GM13976 (cell line): ENCODE measurements at regions of chr15 and their contacts with region 1.

Region 1: DNA sequence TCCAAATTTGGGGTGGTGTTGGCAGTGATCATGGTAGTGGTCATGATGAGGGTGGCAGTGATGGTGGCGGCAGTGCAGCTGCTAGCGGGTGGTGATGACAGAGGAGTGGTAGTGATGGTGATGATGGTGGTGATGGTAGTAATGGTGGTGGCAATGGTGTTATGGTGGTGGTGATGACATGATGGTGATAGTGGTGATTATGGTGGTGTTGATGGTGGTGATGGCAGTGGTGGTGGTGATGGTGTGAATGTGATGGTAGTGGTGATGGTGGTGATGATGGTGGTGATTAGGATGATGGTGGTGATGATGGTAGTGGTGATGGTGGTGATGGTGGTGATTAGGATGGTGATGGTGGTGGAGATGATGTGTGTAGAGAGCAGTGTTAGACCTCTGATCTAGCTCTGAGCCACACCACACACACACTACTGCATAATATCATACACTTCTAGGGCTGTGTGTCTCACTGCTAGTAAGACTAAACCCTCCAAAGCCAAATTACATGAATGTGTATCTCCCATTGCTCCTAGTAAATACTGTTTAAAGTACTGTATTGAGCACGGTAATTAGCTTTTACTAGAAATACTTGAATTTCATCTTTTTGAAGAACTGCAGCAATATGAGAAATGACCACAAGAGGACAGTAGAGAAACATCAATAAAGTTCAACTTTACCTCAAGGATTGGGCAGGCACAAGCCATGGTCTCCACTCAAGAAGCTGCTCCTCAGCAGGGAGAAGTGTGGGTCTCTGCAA is 28.8 kb downstream of the TMED3 start:
- DNase-seq: peak; percentile 37
- CTCF ChIP-seq: peak; percentile 30

Region 2: DNA sequence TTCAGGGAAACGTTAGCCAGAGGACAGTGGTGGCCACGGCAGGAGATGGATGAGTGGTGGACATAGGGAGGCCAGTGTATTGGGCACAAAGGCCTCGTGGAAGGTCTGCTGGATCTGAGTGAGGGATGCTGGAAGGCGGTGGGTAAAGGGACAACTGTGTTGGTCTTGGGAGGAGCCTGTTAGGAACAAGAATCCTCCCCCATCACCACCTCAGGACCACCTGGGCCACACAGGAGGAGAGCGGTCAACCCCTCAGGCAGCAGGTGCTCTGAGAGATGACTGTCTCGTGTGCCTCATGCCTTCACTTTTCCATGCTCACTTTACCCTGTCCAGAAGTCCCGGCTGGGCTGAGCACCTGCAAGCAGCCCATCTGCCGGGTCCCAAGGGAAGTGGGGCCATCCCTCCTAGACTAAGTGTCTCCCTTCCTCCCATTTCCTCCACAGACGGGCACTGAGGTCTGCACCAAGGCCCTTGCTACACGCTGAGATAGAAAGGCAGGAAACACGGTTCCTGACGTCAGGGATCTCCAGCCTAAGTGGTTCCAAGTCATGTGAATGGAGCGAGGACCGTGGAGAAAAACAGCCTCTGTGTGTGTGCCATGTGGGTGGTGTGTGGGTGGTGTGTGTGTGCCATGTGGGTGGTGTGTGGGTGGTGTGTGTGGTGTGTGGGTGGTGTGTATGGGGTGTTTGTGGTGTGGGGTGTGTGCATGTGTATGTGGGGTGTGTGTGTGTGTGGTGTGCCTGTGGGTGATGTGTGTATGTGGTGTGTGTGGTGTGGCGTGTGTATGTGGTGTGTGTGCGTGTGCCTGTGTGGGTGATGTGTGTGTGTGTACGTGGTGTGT is 347.1 kb before region 1 on chr15:
- in situ Hi-C with region 1: no loop called
- DNase-seq: no peak
- CTCF ChIP-seq: no peak

Region 3: DNA sequence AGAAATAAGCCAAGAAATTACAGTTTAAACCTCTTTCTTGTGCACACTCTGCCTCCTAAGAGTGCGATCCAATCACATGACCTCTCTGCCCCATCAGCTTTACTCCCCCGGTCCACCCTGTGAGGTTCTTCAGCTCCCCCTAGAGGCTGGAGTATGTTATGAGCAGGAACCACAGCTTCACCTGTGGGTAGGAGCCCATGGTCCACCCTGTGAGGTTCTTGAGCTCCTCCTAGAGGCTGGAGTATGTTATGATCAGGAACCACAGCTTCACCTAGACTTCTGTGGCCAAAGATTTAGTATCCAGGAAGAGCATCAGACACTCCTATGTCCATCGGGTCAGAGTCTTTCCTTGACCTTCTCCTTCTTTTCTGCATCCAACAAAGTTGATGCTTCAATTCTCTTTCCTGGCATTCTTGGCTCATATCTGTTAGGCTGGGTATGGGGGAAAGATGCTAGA is 256.3 kb after region 1 on chr15:
- in situ Hi-C with region 1: loop called (anchors 25 kb)
- DNase-seq: peak; percentile 75
- CTCF ChIP-seq: peak; percentile 77

Region 4: DNA sequence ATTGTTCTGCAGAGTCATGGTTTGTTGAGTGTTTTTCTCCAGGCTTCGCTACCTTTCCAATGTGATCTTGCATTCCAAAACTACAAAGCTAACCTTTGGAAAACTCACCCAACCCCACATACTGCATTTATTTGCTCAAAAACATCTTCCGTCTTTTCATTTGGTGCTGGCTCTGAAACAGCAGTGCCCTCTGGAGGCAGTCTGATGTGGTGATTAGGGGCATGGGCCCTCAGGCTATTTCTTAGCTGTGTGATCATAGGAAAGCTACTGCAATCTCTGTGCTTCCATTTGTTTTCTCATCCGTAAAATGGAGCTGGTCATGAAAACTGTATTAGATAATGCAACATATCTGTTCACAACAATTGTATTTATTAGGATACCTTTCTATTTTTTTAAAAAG is 510.0 kb after region 1 on chr15:
- in situ Hi-C with region 1: loop called (anchors 25 kb)
- DNase-seq: no peak
- CTCF ChIP-seq: peak; percentile 33